Naive thymus-derived CD4-positive, alpha-beta T cell (primary cell): ENCODE measurements at regions of chr14 and their contacts with region 1.

Region 1: DNA sequence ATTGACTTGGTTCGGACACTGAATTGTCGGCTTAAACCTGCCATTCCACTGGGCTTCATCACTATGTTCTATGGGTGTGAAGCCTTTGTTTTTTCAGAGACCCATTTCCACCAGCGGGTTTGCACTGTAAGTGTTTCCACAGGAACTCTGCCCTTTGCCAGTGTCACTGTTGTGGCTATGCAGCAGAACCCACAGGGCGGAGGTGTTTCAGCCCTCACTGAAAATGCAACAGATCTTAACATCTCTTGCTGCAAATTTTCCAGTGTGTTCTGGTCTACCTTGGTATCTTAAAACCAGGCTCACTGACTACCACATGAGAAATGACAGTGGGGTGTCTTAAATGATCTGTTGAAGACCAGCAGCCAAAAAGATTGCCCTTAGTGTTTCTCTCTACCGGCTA is 21.1 kb downstream of the PRKCH start:
- DNase-seq: peak; percentile 46 to 91 (median 87)
- ATAC-seq: peak; percentile 76
- H3K4me3 ChIP-seq: peak overlapping the region; percentile 28
- H3K4me3 Mint-ChIP-seq: peak overlapping the region; percentile 76 to 97 (median 82)
- H3K27ac ChIP-seq: peak overlapping the region; percentile 76
- H3K27ac Mint-ChIP-seq: peak overlapping the region in 8 of 9 donors; percentile 92 to 100 (median 98)
- H3K4me1 ChIP-seq: peaks cover 92% of the 10 kb centered on the region in 2 donors
- H3K4me1 Mint-ChIP-seq: peaks cover 18 to 94% (median 82%) of the 10 kb centered on the region in 7 donors
- H3K27me3 ChIP-seq: no peaks in the 10 kb centered on the region
- H3K27me3 Mint-ChIP-seq: no peaks in the 10 kb centered on the region

Region 2: GRCh38 chr14:61296719-61297502 is 45.6 kb before region 1 on chr14:
- CTCF ChIA-PET with region 1: no interaction called
- POLR2A ChIA-PET with region 1: no interaction called
- intact Hi-C with region 1: loop called in 1 of 2 experiments (anchors 1 kb)
- DNase-seq: peak in 7 of 9 donors; percentile 38 to 68 (median 52)
- ATAC-seq: peak; percentile 85
- H3K4me3 ChIP-seq: no peak overlapping the region
- H3K4me3 Mint-ChIP-seq: peak overlapping the region in 2 of 10 donors; percentile 20 to 39
- H3K27ac ChIP-seq: no peak overlapping the region
- H3K27ac Mint-ChIP-seq: peak overlapping the region in 7 of 9 donors; percentile 26 to 88 (median 66)
- H3K4me1 ChIP-seq: peaks cover 15 to 40% of the 10 kb centered on the region in 2 donors
- H3K4me1 Mint-ChIP-seq: peaks cover 18 to 59% (median 56%) of the 10 kb centered on the region in 7 donors
- H3K27me3 ChIP-seq: no peaks in the 10 kb centered on the region
- H3K27me3 Mint-ChIP-seq: no peaks in the 10 kb centered on the region

Region 3: DNA sequence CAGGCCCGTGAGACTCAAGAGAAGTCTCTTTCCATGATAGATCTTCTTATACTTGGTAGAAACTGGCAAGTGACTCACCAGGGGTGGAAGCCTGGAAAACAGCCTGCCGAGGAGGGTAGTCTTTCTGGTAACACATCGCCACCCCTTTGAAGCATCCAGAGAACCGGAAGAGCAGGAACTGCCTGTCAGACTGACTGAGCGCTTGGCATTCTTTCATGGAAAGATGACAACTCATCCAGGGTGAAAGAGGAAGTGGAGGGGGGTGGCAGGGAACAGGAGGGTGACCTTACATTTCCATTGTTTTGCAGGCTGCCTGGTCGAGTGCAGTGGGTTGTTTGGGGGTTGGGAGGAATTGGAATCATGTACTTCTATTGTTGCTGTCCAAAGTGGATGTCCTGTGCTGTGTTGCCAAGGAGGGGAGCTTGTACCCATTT is 13.4 kb after region 1 on chr14:
- CTCF ChIA-PET with region 1: interaction called, 4 read pairs
- POLR2A ChIA-PET with region 1: interaction called, 12 read pairs
- intact Hi-C with region 1: loop called (anchors 1 kb)
- DNase-seq: peak in 2 of 9 donors; percentile 50 to 73
- ATAC-seq: peak; percentile 46
- H3K4me3 ChIP-seq: peak overlapping the region; percentile 15
- H3K4me3 Mint-ChIP-seq: peak overlapping the region; percentile 65 to 97 (median 80)
- H3K27ac ChIP-seq: peak overlapping the region; percentile 14
- H3K27ac Mint-ChIP-seq: peak overlapping the region in 8 of 9 donors; percentile 68 to 97 (median 89)
- H3K4me1 ChIP-seq: peaks cover 93% of the 10 kb centered on the region in 2 donors
- H3K4me1 Mint-ChIP-seq: peaks cover 0 to 96% (median 74%) of the 10 kb centered on the region in 7 donors
- H3K27me3 ChIP-seq: no peaks in the 10 kb centered on the region
- H3K27me3 Mint-ChIP-seq: no peaks in the 10 kb centered on the region

Region 4: GRCh38 chr14:61381547-61381946 is 39.1 kb after region 1 on chr14:
- CTCF ChIA-PET with region 1: interaction called, 7 read pairs
- POLR2A ChIA-PET with region 1: interaction called, 11 read pairs
- intact Hi-C with region 1: loop called in 1 of 2 experiments (anchors 1 kb)
- DNase-seq: no peak
- ATAC-seq: no peak
- H3K4me3 ChIP-seq: no peak overlapping the region
- H3K4me3 Mint-ChIP-seq: peak overlapping the region in 8 of 10 donors; percentile 7 to 69 (median 59)
- H3K27ac ChIP-seq: peak overlapping the region; percentile 32
- H3K27ac Mint-ChIP-seq: peak overlapping the region in 6 of 9 donors; percentile 24 to 93 (median 86)
- H3K4me1 ChIP-seq: peaks cover 97 to 99% of the 10 kb centered on the region in 2 donors
- H3K4me1 Mint-ChIP-seq: peaks cover 0 to 56% (median 46%) of the 10 kb centered on the region in 7 donors
- H3K27me3 ChIP-seq: no peaks in the 10 kb centered on the region
- H3K27me3 Mint-ChIP-seq: no peaks in the 10 kb centered on the region

Region 5: GRCh38 chr14:61403411-61403810 is 60.9 kb after region 1 on chr14:
- CTCF ChIA-PET with region 1: interaction called, 5 read pairs
- POLR2A ChIA-PET with region 1: interaction called, 16 read pairs
- intact Hi-C with region 1: loop called (anchors 1 to 2 kb)
- DNase-seq: peak in 7 of 9 donors; percentile 52 to 79 (median 67)
- ATAC-seq: peak; percentile 89
- H3K4me3 ChIP-seq: peak overlapping the region; percentile 3
- H3K4me3 Mint-ChIP-seq: peak overlapping the region; percentile 17 to 84 (median 76)
- H3K27ac ChIP-seq: peak overlapping the region; percentile 71
- H3K27ac Mint-ChIP-seq: peak overlapping the region in 8 of 9 donors; percentile 76 to 96 (median 91)
- H3K4me1 ChIP-seq: peaks cover 84 to 88% of the 10 kb centered on the region in 2 donors
- H3K4me1 Mint-ChIP-seq: peaks cover 0 to 93% (median 70%) of the 10 kb centered on the region in 7 donors
- H3K27me3 ChIP-seq: no peaks in the 10 kb centered on the region
- H3K27me3 Mint-ChIP-seq: no peaks in the 10 kb centered on the region

Region 6: GRCh38 chr14:61456720-61457119 is 114.2 kb after region 1 on chr14:
- CTCF ChIA-PET with region 1: interaction called, 3 read pairs
- POLR2A ChIA-PET with region 1: interaction called, 5 read pairs
- intact Hi-C with region 1: loop called (anchors 1 kb)
- DNase-seq: peak; percentile 63 to 82 (median 77)
- ATAC-seq: peak; percentile 76
- H3K4me3 ChIP-seq: no peak overlapping the region
- H3K4me3 Mint-ChIP-seq: peak overlapping the region in 5 of 10 donors; percentile 5 to 80 (median 51)
- H3K27ac ChIP-seq: peak overlapping the region; percentile 32
- H3K27ac Mint-ChIP-seq: peak overlapping the region in 8 of 9 donors; percentile 70 to 92 (median 86)
- H3K4me1 ChIP-seq: peaks cover 53 to 59% of the 10 kb centered on the region in 2 donors
- H3K4me1 Mint-ChIP-seq: peaks cover 52 to 93% (median 89%) of the 10 kb centered on the region in 7 donors
- H3K27me3 ChIP-seq: no peaks in the 10 kb centered on the region
- H3K27me3 Mint-ChIP-seq: no peaks in the 10 kb centered on the region